ENCODE measurements at regions of chrX and their contacts with region 1.

Region 1: GRCh38 chrX:48911412-48912182 is at the start of gene SLC35A2:
- DNase-seq: peak; percentile 86 to 91
- H3K4me3 ChIP-seq: peak within 1 kb of the TSS; percentile 87
- H3K4me3 Mint-ChIP-seq: peak within 1 kb of the TSS; percentile 95
- H3K27ac Mint-ChIP-seq: peak within 1 kb of the TSS; percentile 100
- H3K4me1 ChIP-seq: 0 out of 2 replicates have a peak, but pooled peaks cover 7% of the 10 kb centered on the region
- H3K4me1 Mint-ChIP-seq: peaks cover 21% of the 10 kb centered on the region
- H3K27me3 ChIP-seq: no peaks in the 10 kb centered on the region
- H3K27me3 Mint-ChIP-seq: no peaks in the 10 kb centered on the region
- CTCF ChIP-seq: no peak
- total RNA-seq, gene SLC35A2: 58.8 and 61.4 TPM in 2 replicates

Region 2: GRCh38 chrX:48854898-48855297 is 56.7 kb before region 1 on chrX:
- CTCF ChIA-PET with region 1: interaction called, 3 read pairs
- POLR2A ChIA-PET with region 1: no interaction called
- intact Hi-C with region 1: loop called (anchors 2 kb)
- DNase-seq: peak; percentile 36
- H3K4me3 ChIP-seq: no peak overlapping the region
- H3K4me3 Mint-ChIP-seq: peak overlapping the region; percentile 61
- H3K27ac Mint-ChIP-seq: peak overlapping the region; percentile 17
- H3K4me1 ChIP-seq: no peaks in the 10 kb centered on the region; the same call in 1 of the 2 replicates
- H3K4me1 Mint-ChIP-seq: peaks cover 21% of the 10 kb centered on the region
- H3K27me3 ChIP-seq: no peaks in the 10 kb centered on the region
- H3K27me3 Mint-ChIP-seq: no peaks in the 10 kb centered on the region
- CTCF ChIP-seq: peak in 1 of 2 experiments; percentile 30

Region 3: DNA sequence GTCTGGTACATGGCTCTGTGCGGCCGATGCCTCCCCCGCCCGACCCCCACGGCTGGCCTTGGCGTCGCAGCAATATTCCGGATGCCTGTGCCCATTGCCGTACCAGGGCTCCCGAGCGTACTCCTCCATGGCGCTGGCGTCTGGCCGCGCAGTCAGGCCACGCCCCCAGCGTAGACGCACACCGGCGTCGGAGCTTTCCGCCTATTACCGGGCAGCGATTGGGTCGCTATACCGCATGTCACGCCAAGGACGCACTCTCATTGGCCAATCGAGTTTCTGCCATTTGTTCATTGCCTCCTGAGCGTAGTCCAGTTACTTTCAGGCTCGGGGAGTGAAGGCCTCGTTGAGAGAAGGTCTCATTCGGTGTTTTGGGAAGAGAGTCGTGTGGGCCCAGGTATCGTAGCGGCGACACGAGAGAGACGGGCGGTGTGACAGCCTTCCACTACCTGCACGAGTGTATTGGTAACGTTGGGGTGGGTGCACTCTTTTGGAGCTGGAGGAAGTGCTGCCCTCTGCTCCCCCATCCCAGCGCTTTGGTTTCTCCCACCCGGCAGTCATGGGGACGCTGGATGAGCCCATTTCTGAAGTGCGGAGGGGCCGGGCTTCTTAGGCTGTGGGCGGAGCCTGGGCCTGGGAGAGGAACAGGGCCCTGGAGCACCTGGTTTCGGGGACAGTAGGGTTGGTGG is 13.8 kb before region 1 on chrX and contains the starts of genes PQBP1 and TIMM17B:
- CTCF ChIA-PET with region 1: interaction called, 4 read pairs
- POLR2A ChIA-PET with region 1: interaction called, 24 read pairs
- intact Hi-C with region 1: loop called (anchors 1 kb)
- DNase-seq: peak; percentile 91 to 94
- H3K4me3 ChIP-seq: peak within 1 kb of the TSS; percentile 90
- H3K4me3 Mint-ChIP-seq: peak within 1 kb of the TSS; percentile 89
- H3K27ac Mint-ChIP-seq: peak within 1 kb of the TSS; percentile 98
- H3K4me1 ChIP-seq: no peaks in the 10 kb centered on the region
- H3K4me1 Mint-ChIP-seq: no peaks in the 10 kb centered on the region
- H3K27me3 ChIP-seq: no peaks in the 10 kb centered on the region
- H3K27me3 Mint-ChIP-seq: no peaks in the 10 kb centered on the region
- CTCF ChIP-seq: no peak
- total RNA-seq, gene PQBP1: 111 and 114 TPM in 2 replicates
- total RNA-seq, gene TIMM17B: 82.5 and 90.6 TPM in 2 replicates

Measured in Caco-2 (cell line).